GM18951 (cell line): ENCODE measurements at regions of chr6 and their contacts with region 1.

Region 1: GRCh38 chr6:53986165-53986720 is 125.0 kb upstream of the MLIP start:
- POLR2A ChIP-seq: no peak

Region 2: DNA sequence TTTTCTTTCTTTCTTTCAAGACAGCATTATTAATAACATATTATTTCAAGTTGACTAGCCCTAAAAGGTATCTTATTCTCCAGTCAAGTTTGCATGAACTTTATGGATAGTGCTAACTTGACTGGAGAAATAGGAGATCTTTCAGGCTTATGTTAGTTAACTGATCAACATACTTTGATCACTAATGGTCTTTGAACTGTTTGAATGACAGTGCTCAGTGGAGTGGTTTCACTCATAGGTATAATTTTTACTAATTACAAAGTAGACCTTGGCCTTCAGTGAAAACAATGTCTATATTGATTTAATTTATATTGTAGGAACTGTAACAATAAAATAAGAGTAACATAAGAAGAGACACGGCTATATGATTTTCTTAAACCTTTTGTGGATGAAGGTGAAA is 199.4 kb before region 1 on chr6:
- in situ Hi-C with region 1: no loop called
- POLR2A ChIP-seq: no peak

Region 3: GRCh38 chr6:54031169-54031568 is 44.9 kb after region 1 on chr6:
- in situ Hi-C with region 1: no loop called
- POLR2A ChIP-seq: no peak

Region 4: GRCh38 chr6:54717849-54718455 is 731.7 kb after region 1 on chr6:
- in situ Hi-C with region 1: loop called (anchors 25 kb)
- POLR2A ChIP-seq: no peak

Region 5: DNA sequence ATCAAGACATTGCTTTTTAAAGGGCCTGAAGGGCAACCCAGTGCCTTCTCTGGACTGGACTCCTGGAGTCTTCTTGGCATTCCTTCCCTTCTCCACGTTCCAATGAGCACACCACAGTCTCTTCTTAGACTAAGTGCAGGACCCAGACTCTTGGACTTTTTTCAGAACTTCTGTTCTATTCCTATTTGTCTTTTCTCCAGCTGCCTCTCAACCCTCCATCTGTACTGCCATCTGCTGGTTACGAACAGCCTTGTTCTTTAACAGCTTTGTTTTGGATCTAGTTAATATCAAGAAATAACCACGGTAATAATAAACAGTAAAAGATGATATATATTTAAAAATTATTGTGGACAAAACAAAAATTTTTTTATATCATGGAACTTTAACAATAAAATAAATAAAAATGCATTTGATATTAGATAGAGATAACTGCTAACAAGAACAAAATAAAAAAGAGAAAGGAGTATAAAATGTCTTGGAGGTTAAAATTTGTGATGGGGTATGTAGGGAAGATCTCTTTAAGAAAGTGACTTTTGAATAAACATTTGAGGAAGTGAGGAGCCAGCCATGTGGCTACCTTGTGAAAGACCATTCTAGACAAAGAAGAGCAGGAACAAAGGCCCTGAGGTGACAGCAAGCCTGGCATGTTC is 1083.0 kb after region 1 on chr6:
- in situ Hi-C with region 1: loop called (anchors 25 kb)
- POLR2A ChIP-seq: no peak